ENCODE measurements at regions of chr10 and their contacts with region 1.

Region 1: GRCh38 chr10:58201704-58202103 is 66.0 kb downstream of the IPMK start:
- DNase-seq: no peak
- H3K4me3 ChIP-seq: no peak overlapping the region
- CTCF ChIP-seq: no peak
- POLR2A ChIP-seq: no peak

Region 2: DNA sequence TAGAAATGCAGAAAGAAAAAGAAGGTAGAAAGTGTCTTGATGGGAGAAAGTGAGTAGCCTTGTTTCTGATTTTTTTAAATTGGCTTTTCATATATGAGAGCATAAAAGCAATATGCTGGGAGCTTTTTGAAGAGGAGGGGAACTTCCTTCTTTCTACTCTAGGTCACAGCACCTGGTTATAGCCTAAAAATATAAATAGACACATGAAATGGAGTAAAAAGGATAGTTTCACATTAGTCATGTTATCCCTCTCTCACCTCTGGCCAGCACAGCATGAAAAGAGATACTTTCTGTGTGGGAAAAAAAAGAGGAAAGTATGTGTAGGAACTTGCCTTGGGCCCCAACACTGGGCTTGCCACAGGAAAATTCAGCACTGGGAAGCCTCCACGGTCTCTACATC is 1548.4 kb before region 1 on chr10:
- intact Hi-C with region 1: no loop called
- DNase-seq: no peak
- H3K4me3 ChIP-seq: no peak overlapping the region
- CTCF ChIP-seq: no peak
- POLR2A ChIP-seq: no peak

Region 3: DNA sequence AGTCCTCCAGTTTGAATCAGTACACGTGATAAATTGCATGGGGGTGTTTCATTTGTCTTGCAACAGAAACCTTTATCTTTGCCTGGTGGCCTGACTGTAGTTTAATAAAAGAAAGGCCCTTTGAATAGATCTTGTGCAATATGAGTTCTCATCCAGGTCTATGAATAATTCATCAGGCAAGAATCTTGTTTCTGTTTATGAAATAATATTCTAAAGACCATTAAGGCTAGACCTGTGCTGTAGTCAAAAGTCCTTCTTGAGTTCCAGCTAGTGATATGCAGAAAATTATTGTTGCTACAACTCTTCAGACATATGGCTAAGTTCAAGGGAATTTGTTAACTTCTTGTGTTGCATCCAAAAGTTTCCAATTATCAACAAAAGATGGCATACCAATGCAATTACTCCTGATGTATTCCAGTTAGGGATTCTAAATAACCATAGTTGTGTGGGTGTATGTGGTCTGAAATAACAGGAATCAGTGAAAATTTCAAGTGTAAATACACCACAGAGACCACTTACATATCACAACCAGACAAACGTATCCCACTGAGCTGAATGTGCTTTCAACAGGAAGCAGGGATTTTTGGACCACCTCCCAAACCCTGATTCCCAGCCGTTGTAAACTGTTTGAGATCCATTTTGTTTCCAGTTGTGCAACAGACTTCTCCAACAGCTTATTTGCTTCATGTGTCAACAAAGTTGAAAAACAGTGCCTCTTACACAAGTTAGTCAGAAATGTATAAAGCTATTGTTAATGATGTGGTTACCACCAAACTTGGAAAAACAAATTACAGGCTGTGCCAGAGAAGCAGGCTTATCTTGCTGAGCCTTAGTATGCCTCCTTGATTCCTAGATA is 256.3 kb after region 1 on chr10:
- intact Hi-C with region 1: loop called (anchors 5 kb)
- DNase-seq: peak in 1 of 2 donors; percentile 68
- H3K4me3 ChIP-seq: no peak overlapping the region
- CTCF ChIP-seq: no peak
- POLR2A ChIP-seq: no peak

Region 4: GRCh38 chr10:59508296-59508695 is 1306.6 kb after region 1 on chr10:
- intact Hi-C with region 1: no loop called
- DNase-seq: peak in 1 of 2 donors; percentile 18
- H3K4me3 ChIP-seq: no peak overlapping the region
- CTCF ChIP-seq: no peak
- POLR2A ChIP-seq: no peak

Region 5: DNA sequence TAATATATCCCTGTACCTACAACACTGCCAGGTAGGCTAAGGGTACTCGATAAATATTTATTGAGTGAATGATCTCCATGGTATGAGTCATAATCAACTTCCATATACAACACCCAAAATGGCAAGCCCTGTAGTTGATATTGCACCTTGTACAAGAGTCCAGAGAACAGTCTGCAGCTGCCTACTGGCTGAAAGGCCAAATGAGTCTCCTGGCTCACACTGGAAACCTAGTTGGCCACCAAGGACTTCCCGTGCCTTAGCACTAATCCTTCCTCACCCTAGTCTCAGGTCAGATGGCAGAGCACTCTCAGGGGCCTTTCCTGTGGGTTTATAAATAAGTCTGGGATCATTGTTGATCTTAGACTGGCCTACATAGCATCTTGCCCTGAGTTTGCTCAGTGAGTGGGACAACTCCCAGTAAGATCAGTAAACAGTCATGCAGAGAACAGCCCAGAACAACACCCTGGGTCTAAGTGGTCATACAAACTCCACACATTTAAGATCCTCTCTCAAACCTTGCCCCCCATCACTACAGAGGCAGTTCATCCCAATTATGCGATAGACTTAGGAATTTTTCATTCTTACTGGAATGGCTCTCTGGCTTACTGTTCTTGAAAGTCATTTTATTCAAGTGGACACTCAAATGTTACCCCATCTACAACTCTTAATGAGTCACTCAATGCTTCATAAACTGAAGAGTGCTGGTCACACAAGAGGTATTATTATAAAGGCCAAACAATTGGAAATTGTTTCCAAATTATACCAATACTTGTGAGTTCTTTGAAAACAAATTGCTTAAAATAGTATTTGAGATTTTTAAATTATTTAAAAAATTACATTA is 1522.6 kb after region 1 on chr10:
- intact Hi-C with region 1: no loop called
- DNase-seq: no peak
- H3K4me3 ChIP-seq: no peak overlapping the region
- CTCF ChIP-seq: no peak
- POLR2A ChIP-seq: no peak

Measured in lower leg skin (tissue), 4 donors.